ENCODE measurements at regions of chr6 and their contacts with region 1.

Region 1: DNA sequence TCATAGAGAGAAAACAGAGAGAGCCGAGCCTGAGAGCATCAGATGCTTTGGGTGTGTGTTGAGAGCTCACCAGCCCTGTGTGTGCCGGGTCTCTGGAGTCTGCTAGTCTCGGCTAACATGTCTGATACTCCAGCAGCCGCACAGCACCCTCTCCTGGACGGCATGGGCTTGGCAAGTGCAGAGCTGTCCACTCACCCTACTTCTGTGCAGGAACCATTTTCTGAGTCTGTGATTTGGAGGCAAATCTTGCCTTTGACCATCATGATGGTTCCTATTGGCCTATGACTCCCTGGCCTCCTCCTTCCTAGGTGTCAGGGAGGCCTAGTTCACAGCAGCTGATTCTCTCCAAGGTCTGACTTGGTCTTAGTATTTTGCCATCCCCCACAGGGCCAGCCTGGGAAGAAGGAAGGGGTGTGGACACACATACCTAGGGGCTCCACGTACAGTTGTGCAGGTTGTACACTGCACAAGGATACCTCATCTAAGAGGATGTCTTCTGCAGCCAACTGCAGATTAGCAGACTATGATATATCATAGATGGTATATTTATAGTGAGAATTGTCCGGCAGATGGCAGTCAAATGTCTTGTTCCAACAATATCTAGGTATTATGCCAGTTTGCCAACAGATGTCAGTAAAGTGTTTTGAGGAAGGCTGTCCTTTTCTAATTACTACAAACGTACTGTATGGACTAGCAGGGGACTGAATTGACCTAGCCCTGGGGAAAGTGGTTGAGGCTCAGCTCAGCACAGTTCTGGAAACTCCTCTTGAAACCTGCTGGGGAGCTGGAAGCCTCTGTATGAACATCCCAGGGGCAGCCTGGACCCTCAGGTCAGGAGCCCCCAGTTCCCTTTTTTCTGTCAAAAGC is 13.0 kb downstream of the FGD2 start:
- DNase-seq: peak; percentile 74 to 88 (median 83)
- ATAC-seq: peak; percentile 96
- H3K4me3 ChIP-seq: no peak overlapping the region
- H3K4me3 Mint-ChIP-seq: peak overlapping the region in 3 of 10 donors; percentile 17 to 40 (median 35)
- H3K27ac ChIP-seq: peak overlapping the region; percentile 15
- H3K27ac Mint-ChIP-seq: peak overlapping the region; percentile 65 to 87 (median 80)
- H3K4me1 ChIP-seq: peaks cover 23 to 32% of the 10 kb centered on the region in 2 donors
- H3K4me1 Mint-ChIP-seq: peaks cover 35 to 55% (median 46%) of the 10 kb centered on the region in 7 donors
- H3K27me3 ChIP-seq: no peaks in the 10 kb centered on the region
- H3K27me3 Mint-ChIP-seq: no peaks in the 10 kb centered on the region

Region 2: GRCh38 chr6:36874443-36875249 is 143.8 kb before region 1 on chr6 and contains the start of gene PPIL1:
- CTCF ChIA-PET with region 1: interaction called, 11 read pairs
- POLR2A ChIA-PET with region 1: interaction called, 10 read pairs
- intact Hi-C with region 1: loop called in 1 of 2 experiments (anchors 2 kb)
- DNase-seq: peak; percentile 75 to 92 (median 90)
- ATAC-seq: peak; percentile 92
- H3K4me3 ChIP-seq: peak within 1 kb of the TSS; percentile 92
- H3K4me3 Mint-ChIP-seq: peak within 1 kb of the TSS; percentile 85 to 100 (median 98)
- H3K27ac ChIP-seq: peak within 1 kb of the TSS; percentile 87
- H3K27ac Mint-ChIP-seq: peak within 1 kb of the TSS; percentile 97 to 100 (median 98)
- H3K4me1 ChIP-seq: peaks cover 8 to 21% of the 10 kb centered on the region in 2 donors
- H3K4me1 Mint-ChIP-seq: peaks cover 13 to 54% (median 47%) of the 10 kb centered on the region in 7 donors
- H3K27me3 ChIP-seq: no peaks in the 10 kb centered on the region
- H3K27me3 Mint-ChIP-seq: peaks cover 0 to 7% (median 5%) of the 10 kb centered on the region in 5 donors
- total RNA-seq, gene PPIL1: 3.5 to 34.7 (median 10.3) TPM

Region 3: GRCh38 chr6:36979347-36979742 is 39.1 kb before region 1 on chr6:
- CTCF ChIA-PET with region 1: interaction called, 5 read pairs
- POLR2A ChIA-PET with region 1: no interaction called
- intact Hi-C with region 1: loop called in 1 of 2 experiments (anchors 1 kb)
- DNase-seq: peak in 6 of 9 donors; percentile 36 to 62 (median 48)
- ATAC-seq: peak; percentile 70
- H3K4me3 ChIP-seq: no peak overlapping the region
- H3K4me3 Mint-ChIP-seq: peak overlapping the region in 2 of 10 donors; percentile 2 to 20
- H3K27ac ChIP-seq: no peak overlapping the region
- H3K27ac Mint-ChIP-seq: peak overlapping the region; percentile 44 to 88 (median 80)
- H3K4me1 ChIP-seq: peaks cover 13 to 20% of the 10 kb centered on the region in 2 donors
- H3K4me1 Mint-ChIP-seq: peaks cover 0 to 33% (median 27%) of the 10 kb centered on the region in 7 donors
- H3K27me3 ChIP-seq: no peaks in the 10 kb centered on the region
- H3K27me3 Mint-ChIP-seq: no peaks in the 10 kb centered on the region

Region 4: DNA sequence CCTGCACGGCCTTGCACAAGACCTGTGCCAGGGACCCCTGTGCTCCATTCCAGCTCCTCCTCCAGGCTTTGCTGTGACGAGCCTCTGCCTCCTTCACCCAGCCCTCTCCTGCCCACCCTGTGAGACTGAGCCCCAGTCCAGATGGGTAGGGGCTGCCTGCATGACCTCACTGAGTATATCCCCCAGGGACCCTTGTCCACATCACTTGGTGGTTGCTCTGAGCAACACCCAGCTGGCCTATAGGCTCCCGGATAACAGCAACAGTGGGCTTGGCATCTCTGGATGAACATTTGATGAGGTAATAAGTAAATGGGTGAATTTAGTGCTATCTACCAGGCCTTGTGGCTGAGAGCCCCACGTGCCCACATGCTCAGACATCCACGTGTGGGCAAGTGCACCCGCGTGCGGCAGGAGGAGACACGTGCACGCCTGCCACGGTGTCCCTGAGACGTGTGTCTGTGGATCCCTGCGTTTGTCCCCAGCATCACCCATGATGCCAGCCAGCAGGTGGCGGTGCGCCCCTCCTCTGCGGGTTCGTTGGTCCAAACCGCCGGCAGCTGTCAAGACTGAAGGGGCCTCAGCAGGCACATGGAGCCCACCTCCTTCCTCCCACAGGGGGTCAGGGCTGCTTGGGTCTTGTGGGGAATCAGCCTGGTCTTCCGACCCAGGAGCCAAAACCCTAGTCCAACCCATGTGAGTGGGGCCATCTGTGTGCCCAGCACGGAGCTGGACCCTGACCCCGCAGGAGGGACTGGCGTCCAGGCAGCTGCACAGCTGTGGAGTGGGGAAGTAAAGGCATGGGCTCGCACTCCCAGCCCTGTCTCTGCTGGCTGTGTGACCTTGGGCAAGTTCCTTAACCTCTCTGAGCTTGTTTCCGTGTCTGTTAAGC is 33.0 kb after region 1 on chr6:
- CTCF ChIA-PET with region 1: interaction called, 178 read pairs
- POLR2A ChIA-PET with region 1: interaction called, 19 read pairs
- intact Hi-C with region 1: loop called (anchors 1 kb)
- DNase-seq: peak; percentile 73 to 87 (median 83)
- ATAC-seq: peak; percentile 83
- H3K4me3 ChIP-seq: peak overlapping the region; percentile 58
- H3K4me3 Mint-ChIP-seq: peak overlapping the region; percentile 66 to 94 (median 72)
- H3K27ac ChIP-seq: peak overlapping the region; percentile 75
- H3K27ac Mint-ChIP-seq: peak overlapping the region; percentile 84 to 99 (median 92)
- H3K4me1 ChIP-seq: peaks cover 46 to 56% of the 10 kb centered on the region in 2 donors
- H3K4me1 Mint-ChIP-seq: peaks cover 49 to 70% (median 57%) of the 10 kb centered on the region in 7 donors
- H3K27me3 ChIP-seq: no peaks in the 10 kb centered on the region
- H3K27me3 Mint-ChIP-seq: no peaks in the 10 kb centered on the region

Region 5: DNA sequence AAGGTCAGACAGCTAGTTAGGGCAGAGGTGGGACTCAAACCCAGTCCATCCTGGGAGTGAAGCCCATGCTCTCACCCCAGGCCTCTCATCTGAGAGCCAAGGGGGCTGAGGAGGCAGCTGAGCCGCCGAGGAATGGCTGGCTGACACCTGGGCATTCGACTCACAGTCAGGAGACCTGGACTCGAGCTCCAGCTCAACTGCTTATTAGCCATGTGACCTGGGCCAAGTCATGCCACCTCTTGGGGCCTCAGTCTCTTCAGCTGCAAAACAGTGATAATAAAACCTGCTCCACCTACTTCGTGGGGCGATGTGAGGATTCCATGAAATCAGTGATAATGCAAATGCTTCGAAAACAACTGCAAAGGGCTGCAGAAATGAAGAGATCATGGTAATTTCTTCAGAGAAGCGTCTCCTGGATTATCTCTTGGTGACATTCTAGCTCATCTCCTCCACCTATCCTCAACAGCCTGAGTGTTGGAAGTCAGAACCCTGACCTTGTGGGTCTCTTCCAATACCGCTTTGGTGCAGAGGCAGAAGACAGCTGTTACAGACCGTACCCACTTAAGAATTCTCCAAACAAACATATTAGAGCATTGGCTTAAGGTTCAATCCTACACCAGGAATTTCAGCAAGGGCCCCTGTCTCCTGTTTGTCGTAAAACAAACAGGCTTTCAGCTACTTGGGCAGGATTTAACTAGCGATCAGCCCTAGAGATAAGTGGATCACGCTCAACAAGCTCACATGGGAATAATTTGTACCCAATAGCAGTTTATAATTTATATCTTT is 91.5 kb after region 1 on chr6:
- CTCF ChIA-PET with region 1: no interaction called
- POLR2A ChIA-PET with region 1: no interaction called
- intact Hi-C with region 1: no loop called
- DNase-seq: no peak
- ATAC-seq: no peak
- H3K4me3 ChIP-seq: no peak overlapping the region
- H3K4me3 Mint-ChIP-seq: no peak overlapping the region
- H3K27ac ChIP-seq: no peak overlapping the region
- H3K27ac Mint-ChIP-seq: peak overlapping the region in 1 of 9 donors; percentile 3
- H3K4me1 ChIP-seq: peaks cover 0 to 3% of the 10 kb centered on the region in 2 donors
- H3K4me1 Mint-ChIP-seq: peaks cover 0 to 32% (median 5%) of the 10 kb centered on the region in 7 donors
- H3K27me3 ChIP-seq: no peaks in the 10 kb centered on the region
- H3K27me3 Mint-ChIP-seq: peaks cover 0 to under 1% (median 0%) of the 10 kb centered on the region in 5 donors

Region 6: DNA sequence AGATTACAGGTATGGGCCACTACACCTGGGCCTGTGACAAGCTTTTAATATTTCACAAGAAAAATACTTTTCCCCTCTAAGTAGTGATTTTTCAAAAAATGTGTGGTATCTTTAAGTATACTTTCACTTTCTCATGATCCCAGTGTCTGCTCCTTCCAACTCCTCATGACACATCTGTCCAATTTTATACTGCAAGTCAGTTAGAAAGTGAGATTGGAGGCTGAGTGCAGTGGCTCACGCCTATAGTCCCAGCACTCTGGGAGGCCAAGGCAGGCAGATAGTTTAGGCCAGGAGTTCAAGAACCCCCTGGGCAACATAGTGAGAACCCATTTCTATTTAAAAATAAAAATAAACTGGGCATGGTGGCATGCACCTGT is 171.7 kb after region 1 on chr6:
- CTCF ChIA-PET with region 1: interaction called, 15 read pairs
- POLR2A ChIA-PET with region 1: no interaction called
- intact Hi-C with region 1: no loop called
- DNase-seq: no peak
- ATAC-seq: no peak
- H3K4me3 ChIP-seq: no peak overlapping the region
- H3K4me3 Mint-ChIP-seq: peak overlapping the region in 8 of 10 donors; percentile 18 to 67 (median 26)
- H3K27ac ChIP-seq: no peak overlapping the region
- H3K27ac Mint-ChIP-seq: peak overlapping the region in 6 of 9 donors; percentile 30 to 81 (median 56)
- H3K4me1 ChIP-seq: peaks cover 28 to 30% of the 10 kb centered on the region in 2 donors
- H3K4me1 Mint-ChIP-seq: peaks cover 30 to 75% (median 66%) of the 10 kb centered on the region in 7 donors
- H3K27me3 ChIP-seq: no peaks in the 10 kb centered on the region
- H3K27me3 Mint-ChIP-seq: no peaks in the 10 kb centered on the region

Region 7: GRCh38 chr6:37691904-37692806 is 673.7 kb after region 1 on chr6:
- CTCF ChIA-PET with region 1: interaction called, 3 read pairs
- POLR2A ChIA-PET with region 1: no interaction called
- intact Hi-C with region 1: loop called in 1 of 2 experiments (anchors 5 kb)
- DNase-seq: peak; percentile 46 to 87 (median 72)
- ATAC-seq: peak; percentile 89
- H3K4me3 ChIP-seq: no peak overlapping the region
- H3K4me3 Mint-ChIP-seq: peak overlapping the region in 1 of 10 donors; percentile 45
- H3K27ac ChIP-seq: no peak overlapping the region
- H3K27ac Mint-ChIP-seq: no peak overlapping the region
- H3K4me1 ChIP-seq: peaks cover 11 to 12% of the 10 kb centered on the region in 2 donors
- H3K4me1 Mint-ChIP-seq: peaks cover 9 to 26% (median 21%) of the 10 kb centered on the region in 7 donors
- H3K27me3 ChIP-seq: peaks cover 0 to 4% of the 10 kb centered on the region in 2 donors
- H3K27me3 Mint-ChIP-seq: peaks cover 26 to 45% (median 34%) of the 10 kb centered on the region in 5 donors

Measured in naive thymus-derived CD4-positive, alpha-beta T cell (primary cell).